ENCODE measurements at regions of chrX and their contacts with region 1.

Region 1: DNA sequence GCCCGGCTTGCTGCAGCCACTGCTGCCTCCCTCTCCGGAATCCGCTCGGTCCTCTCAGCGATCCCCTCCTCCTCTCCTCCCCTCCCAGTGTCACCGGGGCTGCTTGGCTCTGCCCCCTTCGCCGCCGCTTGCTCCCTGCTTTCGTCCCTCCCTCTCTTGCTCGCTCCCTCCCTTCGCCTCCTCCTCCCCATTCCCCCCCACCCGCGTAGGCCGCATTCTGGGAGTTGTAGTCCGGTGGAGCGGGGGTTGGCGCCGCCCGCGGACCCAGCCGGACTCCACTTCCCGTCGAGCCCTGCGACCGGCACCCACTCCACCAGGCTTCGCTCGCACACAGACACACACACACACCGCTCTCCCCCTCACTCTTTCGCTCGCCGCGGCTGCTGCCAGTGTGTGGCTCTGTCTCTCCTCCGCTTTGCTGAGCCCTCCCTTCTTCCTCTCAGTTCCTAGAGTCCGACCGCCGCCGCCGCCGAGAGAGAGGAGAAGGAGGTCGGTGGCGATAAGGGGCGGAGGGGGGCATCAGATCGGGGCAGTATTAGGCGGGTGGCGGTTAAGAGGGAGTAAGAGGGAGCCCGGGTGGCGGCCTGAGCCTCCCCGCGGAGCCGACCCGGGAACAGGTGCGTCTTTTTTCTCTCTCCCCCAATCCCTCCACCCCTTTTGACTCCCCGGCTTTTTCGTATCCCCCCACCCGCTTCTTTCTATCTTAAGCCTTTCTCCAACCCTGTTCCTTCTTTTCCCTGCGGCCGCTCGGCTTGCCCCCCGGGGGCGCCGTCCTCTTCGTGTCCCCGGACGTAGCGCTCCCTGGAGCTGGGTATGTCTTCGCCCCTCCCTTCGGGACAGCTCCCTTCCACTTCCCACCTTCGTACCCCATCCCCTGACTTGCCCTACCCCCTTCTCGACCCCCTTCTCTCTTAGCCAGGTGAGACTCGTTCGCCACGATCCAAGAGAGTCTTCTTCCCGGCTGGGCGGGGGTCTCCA is at the start of gene BCORL1:
- DNase-seq: peak; percentile 93
- H3K4me3 Mint-ChIP-seq: no peak within 1 kb of the TSS
- H3K27ac Mint-ChIP-seq: no peak within 1 kb of the TSS
- H3K4me1 Mint-ChIP-seq: peaks cover 17% of the 10 kb centered on the region
- H3K27me3 Mint-ChIP-seq: no peaks in the 10 kb centered on the region
- total RNA-seq, gene BCORL1: 9.2 to 10.5 TPM

Region 2: DNA sequence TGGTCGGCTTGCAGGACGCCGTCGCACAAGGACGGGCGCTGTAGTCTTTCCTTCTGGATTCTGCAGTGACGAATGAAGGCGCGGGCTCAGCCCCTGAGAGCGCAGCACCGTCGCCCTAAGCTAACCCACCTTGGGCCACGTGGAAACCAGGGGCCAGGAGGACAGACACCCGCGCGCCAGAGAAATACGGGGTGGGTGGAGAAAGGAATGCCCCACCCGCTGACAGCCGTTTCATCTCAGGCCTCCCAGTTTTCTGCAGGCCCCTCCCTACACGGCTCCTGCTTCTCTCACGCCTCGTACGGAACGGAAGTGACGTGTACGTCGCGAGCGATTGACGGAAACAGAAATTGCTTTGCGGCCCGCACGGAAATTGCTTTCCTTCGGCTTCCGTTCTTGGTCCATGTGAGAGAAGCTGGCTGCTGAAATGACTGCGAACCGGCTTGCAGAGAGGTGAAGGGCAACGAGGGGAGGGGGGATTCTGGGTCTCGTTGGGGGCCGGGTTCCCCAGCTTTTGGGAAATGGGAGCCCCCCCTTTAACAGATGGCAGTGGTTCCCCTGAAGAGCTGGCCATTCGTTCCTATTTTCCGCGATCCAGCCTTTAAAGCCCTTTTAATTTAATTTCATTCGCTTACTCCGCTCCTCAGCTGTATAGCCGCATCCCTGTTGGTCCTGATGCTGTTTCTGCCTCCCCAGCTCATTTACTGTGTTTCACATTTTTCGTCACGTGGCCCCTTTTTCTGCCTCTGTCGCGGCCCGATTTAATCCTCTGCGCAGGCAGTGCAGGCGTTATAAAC is 76.6 kb before region 1 on chrX and contains the start of gene UTP14A:
- CTCF ChIA-PET with region 1: no interaction called
- POLR2A ChIA-PET with region 1: no interaction called
- intact Hi-C with region 1: loop called (anchors 2 kb)
- DNase-seq: peak; percentile 92
- H3K4me3 Mint-ChIP-seq: peak within 1 kb of the TSS; percentile 88
- H3K27ac Mint-ChIP-seq: peak within 1 kb of the TSS; percentile 88
- H3K4me1 Mint-ChIP-seq: peaks cover 23% of the 10 kb centered on the region
- H3K27me3 Mint-ChIP-seq: no peaks in the 10 kb centered on the region
- total RNA-seq, gene UTP14A: 29.9 to 31.7 TPM

Region 3: GRCh38 chrX:129931411-129932015 is 51.0 kb before region 1 on chrX:
- CTCF ChIA-PET with region 1: no interaction called
- POLR2A ChIA-PET with region 1: no interaction called
- intact Hi-C with region 1: loop called (anchors 1 kb)
- DNase-seq: peak; percentile 81
- H3K4me3 Mint-ChIP-seq: peak overlapping the region; percentile 74
- H3K27ac Mint-ChIP-seq: peak overlapping the region; percentile 80
- H3K4me1 Mint-ChIP-seq: peaks cover 3% of the 10 kb centered on the region
- H3K27me3 Mint-ChIP-seq: peaks cover 3% of the 10 kb centered on the region

Region 4: DNA sequence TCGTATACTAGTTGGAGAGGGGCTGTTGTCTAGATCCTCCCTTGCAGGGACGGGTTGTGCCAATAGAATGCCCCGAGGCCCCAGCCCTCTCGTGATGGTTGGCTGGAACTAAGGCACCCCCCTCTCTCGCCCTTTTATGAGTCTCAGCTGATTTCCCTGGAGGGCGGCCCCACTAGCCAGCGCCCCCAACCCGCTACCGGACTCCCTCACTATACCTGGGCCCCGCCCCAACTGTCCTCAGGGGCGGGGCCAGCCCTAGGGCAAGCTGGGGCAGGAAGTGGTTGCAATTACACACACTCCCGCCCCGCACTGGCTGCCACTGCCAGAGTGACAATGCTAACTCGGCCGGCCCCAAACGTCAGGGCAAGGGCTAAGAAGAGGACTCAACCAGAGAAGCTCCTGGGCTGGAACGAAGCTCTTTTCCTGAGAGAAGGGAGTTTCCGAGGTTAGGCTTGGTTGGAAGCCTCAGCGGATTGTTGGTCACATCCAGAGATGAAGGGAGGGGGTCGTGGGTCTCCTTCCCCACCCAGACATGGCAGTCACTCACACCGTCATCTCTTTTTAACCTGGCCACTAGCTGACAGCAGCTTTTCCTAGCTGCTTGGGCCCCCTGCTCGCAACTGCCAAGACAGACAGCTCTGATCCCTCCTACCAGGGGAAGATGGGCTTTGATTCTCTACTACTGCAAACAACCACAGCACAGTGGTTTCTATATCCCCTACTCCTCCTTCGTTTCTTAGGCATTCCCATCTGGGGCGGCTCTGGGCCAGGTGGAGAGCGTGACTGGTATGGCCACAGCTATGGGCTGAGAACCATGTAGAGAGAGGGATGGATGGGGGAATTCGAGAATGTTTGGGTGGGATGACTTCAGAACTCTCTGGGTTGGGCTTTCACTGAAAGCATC is 21.1 kb before region 1 on chrX:
- CTCF ChIA-PET with region 1: interaction called, 3 read pairs
- POLR2A ChIA-PET with region 1: no interaction called
- intact Hi-C with region 1: loop called (anchors 1 kb)
- DNase-seq: peak; percentile 85
- H3K4me3 Mint-ChIP-seq: peak overlapping the region; percentile 73
- H3K27ac Mint-ChIP-seq: peak overlapping the region; percentile 83
- H3K4me1 Mint-ChIP-seq: peaks cover 18% of the 10 kb centered on the region
- H3K27me3 Mint-ChIP-seq: no peaks in the 10 kb centered on the region

Region 5: DNA sequence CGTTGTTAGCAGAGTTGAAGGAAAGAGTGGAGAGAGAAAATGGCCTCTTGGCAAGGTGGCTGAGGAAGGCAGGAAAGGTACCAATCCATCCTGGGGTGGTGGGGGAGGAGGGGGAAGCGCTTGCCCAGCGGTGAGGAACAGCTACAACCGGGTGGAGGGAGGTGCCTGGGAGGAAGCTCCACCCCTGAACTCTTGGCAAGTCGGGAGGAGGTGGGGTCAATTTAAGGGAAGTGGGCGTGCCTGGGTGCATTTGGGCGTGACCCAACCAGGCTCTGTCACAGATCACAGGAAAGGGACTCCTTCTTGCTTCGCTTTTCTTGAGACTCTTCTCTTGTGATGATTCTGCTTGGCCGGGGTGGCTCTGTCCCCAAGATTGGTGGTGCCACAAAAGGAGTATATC is 41.6 kb after region 1 on chrX:
- CTCF ChIA-PET with region 1: interaction called, 3 read pairs
- POLR2A ChIA-PET with region 1: no interaction called
- intact Hi-C with region 1: loop called (anchors 1 kb)
- DNase-seq: peak; percentile 89
- H3K4me3 Mint-ChIP-seq: no peak overlapping the region
- H3K27ac Mint-ChIP-seq: peak overlapping the region; percentile 47
- H3K4me1 Mint-ChIP-seq: peaks cover 10% of the 10 kb centered on the region
- H3K27me3 Mint-ChIP-seq: no peaks in the 10 kb centered on the region

Measured in activated CD4-positive, alpha-beta memory T cell treated with anti-CD3 and anti-CD28 coated beads for 36 hours (primary cell).